Left ventricle myocardium superior (tissue), 1 donor: ENCODE measurements at regions of chr15 and their contacts with region 1.

Region 1: GRCh38 chr15:101307048-101307896 is 12.2 kb upstream of the SNRPA1 start:
- DNase-seq: no peak
- ATAC-seq: no peak

Region 2: GRCh38 chr15:100788418-100789105 is 518.7 kb before region 1 on chr15:
- intact Hi-C with region 1: no loop called
- DNase-seq: no peak
- ATAC-seq: no peak

Region 3: DNA sequence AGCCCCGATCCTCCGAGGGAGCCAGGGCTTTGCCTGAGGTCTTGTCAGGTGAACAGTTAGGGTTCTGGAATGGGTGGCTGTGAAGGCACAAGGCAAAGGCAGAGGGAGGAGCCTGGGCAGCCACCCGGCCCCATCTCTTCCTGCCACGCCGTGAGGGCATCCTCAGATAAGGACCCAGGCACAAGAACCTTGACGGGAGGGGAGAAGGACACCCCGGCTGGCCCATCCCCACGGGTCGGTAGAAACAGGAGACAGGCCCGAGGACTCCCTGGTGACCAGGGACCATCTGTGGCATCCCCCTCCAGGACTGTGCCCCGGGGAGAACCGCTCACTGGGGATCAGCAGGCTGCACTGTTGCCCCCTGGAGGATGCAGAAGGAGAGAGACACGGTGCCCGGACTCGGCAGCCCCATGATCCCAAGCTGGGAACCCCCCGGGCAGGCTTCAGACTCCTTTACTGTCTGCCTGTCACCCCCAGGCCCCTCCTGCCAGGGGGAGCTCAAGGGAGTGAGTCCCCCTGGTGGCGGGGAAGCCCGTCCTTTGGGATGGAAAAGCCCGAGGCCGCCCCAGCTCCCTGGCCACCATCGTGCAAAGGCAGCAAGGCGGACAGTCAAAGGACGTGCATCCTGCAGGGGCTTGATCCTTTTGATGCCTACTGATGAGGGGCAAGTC is 194.6 kb after region 1 on chr15:
- intact Hi-C with region 1: loop called (anchors 10 kb)
- DNase-seq: peak; percentile 68
- ATAC-seq: peak; percentile 56

Region 4: GRCh38 chr15:101641166-101641764 is 334.0 kb after region 1 on chr15:
- intact Hi-C with region 1: loop called (anchors 5 kb)
- DNase-seq: peak; percentile 76
- ATAC-seq: peak; percentile 68